ENCODE measurements at regions of chr18 and their contacts with region 1.

Region 1: DNA sequence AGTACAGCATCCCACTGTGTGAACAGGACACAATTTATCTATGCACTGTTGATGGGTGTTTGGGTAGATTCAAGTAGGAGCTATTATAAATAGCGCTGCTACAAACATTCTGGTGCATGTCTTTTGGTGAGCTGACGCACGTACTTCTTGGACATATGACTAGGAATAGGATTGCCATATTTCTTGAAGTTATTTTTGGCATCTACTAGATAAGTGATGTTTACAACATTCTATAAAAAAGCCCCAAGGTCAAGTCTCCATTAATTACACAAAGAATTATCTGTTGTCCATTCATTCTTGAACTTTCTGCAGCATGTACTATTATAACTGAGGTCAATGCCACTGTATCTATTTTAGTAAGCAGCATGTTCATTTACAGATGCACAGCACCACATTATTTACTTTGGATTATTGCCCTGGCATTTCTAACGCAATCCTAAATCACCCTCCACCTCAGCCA is 225.5 kb upstream of the TMEM200C start:
- DNase-seq: peak in 1 of 2 donors; percentile 26
- ATAC-seq: peak; percentile 49 to 98 (median 94)
- H3K4me3 ChIP-seq: no peak overlapping the region
- H3K27ac ChIP-seq: peak overlapping the region in 7 of 10 donors; percentile 9 to 69 (median 54)
- H3K4me1 ChIP-seq: peaks cover 3 to 38% (median 9%) of the 10 kb centered on the region in 9 donors
- H3K27me3 ChIP-seq: no peaks in the 10 kb centered on the region
- CTCF ChIP-seq: no peak

Region 2: DNA sequence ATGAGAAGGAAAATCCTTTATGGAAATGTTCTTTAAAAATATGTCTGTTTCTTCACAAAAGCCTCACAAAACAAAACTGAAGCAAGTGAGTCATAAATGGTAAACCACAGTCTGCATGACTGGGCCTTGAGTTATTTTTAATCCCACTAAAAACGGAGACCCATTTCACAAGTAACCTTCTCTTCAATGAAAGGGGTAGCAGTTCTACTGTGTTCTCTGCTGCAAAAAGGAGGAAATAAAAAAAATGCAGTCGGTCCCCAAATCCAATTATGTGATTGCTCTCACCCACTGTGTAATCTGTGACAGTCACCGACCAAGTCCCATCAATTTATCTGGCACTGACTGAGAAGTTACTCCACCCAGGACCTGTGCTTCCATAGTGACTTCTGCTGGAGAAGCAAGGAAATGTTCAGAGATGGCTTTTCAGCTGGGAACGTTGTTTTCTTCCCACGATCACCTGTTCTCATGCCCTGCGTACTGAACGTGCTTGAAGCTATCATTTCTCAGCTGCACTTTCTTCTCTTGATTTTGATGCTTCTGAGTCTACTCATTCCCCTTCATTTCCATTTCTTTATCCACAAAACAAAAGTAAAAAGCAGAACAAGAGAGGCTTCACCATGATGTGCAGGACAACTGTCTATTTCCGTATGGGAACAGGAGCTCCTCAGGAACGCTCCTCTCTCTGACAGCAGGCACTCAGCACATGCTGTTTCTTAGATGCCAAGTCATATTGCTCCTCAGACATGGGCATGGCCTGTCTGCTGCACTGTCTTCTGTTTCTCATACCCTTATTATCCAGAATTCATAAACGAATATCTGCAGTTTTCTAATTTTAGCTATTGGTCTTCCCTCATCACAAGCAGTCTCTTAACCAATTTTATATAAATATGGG is 145.5 kb before region 1 on chr18:
- intact Hi-C with region 1: loop called in 2 of 10 experiments (anchors 5 to 10 kb)
- DNase-seq: no peak
- ATAC-seq: no peak
- H3K4me3 ChIP-seq: no peak overlapping the region
- H3K27ac ChIP-seq: no peak overlapping the region
- H3K4me1 ChIP-seq: peaks cover 0 to 22% (median 0%) of the 10 kb centered on the region in 9 donors
- H3K27me3 ChIP-seq: peaks cover 0 to 4% (median 0%) of the 10 kb centered on the region in 7 donors
- CTCF ChIP-seq: no peak

Region 3: DNA sequence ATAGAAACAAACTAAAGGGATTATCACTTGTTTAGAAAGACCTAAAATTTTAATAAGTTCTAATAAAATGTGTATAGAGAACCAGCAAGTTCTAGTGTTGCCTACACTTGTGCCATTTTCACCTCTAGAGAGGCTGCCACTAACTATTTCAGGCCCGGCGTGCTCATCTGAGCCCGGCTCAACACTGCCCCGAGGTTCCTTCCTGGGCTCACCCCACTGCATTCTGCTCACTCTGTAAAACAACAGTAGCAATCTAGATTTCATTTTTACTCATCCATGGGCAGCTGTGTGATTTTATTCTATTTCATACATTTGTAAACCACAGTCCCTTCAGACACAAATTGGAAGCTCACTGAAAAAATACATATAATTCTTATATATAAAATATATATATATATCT is 40.7 kb after region 1 on chr18:
- intact Hi-C with region 1: no loop called
- DNase-seq: no peak
- ATAC-seq: no peak
- H3K4me3 ChIP-seq: no peak overlapping the region
- H3K27ac ChIP-seq: no peak overlapping the region
- H3K4me1 ChIP-seq: no peaks in the 10 kb centered on the region
- H3K27me3 ChIP-seq: no peaks in the 10 kb centered on the region
- CTCF ChIP-seq: no peak

Region 4: GRCh38 chr18:6219116-6219717 is 98.4 kb after region 1 on chr18:
- intact Hi-C with region 1: loop called in 1 of 10 experiments (anchors 10 kb)
- DNase-seq: peak; percentile 12 to 15
- ATAC-seq: peak in 6 of 8 donors; percentile 43 to 80 (median 64)
- H3K4me3 ChIP-seq: no peak overlapping the region
- H3K27ac ChIP-seq: no peak overlapping the region
- H3K4me1 ChIP-seq: no peaks in the 10 kb centered on the region
- H3K27me3 ChIP-seq: no peaks in the 10 kb centered on the region
- CTCF ChIP-seq: peak; percentile 38 to 74 (median 66)